Lower leg skin (tissue), 4 donors: ENCODE measurements at regions of chr1 and their contacts with region 1.

Region 1: GRCh38 chr1:19390901-19391595 is 78.9 kb downstream of the SLC66A1 start:
- DNase-seq: peak; percentile 69 to 93
- H3K4me3 ChIP-seq: no peak overlapping the region
- CTCF ChIP-seq: peak in 1 of 3 donors; percentile 36
- POLR2A ChIP-seq: no peak

Region 2: GRCh38 chr1:19485362-19486187 is 94.5 kb after region 1 on chr1 and contains the start of gene CAPZB:
- intact Hi-C with region 1: loop called (anchors 10 kb)
- DNase-seq: peak; percentile 92 to 99
- H3K4me3 ChIP-seq: peak within 1 kb of the TSS; percentile 97
- CTCF ChIP-seq: no peak
- POLR2A ChIP-seq: peak in 1 of 2 donors; percentile 11
- total RNA-seq, gene CAPZB: 84.7 to 124 (median 103) TPM

Region 3: GRCh38 chr1:20185834-20186782 is 795.1 kb after region 1 on chr1 and contains the starts of genes PLA2G2C and UBXN10:
- intact Hi-C with region 1: no loop called
- DNase-seq: peak in 1 of 2 donors; percentile 88
- H3K4me3 ChIP-seq: no peak within 1 kb of the TSS
- CTCF ChIP-seq: no peak
- POLR2A ChIP-seq: no peak
- total RNA-seq, gene PLA2G2C: 0.10 TPM in 1 of 4 donors, not detected in the others
- total RNA-seq, gene UBXN10: 0.12 to 0.91 (median 0.81) TPM in 3 of 4 donors, not detected in the other